ENCODE measurements at regions of chr11 and their contacts with region 1.

Region 1: GRCh38 chr11:119323538-119324033 is 6.7 kb upstream of the MCAM start:
- DNase-seq: peak; percentile 44
- H3K4me3 ChIP-seq: no peak overlapping the region
- H3K27ac ChIP-seq: no peak overlapping the region
- H3K4me1 ChIP-seq: no peaks in the 10 kb centered on the region
- H3K27me3 ChIP-seq: peaks cover 5% of the 10 kb centered on the region
- CTCF ChIP-seq: peak; percentile 43 to 66 (median 64)
- POLR2A ChIP-seq: no peak

Region 2: DNA sequence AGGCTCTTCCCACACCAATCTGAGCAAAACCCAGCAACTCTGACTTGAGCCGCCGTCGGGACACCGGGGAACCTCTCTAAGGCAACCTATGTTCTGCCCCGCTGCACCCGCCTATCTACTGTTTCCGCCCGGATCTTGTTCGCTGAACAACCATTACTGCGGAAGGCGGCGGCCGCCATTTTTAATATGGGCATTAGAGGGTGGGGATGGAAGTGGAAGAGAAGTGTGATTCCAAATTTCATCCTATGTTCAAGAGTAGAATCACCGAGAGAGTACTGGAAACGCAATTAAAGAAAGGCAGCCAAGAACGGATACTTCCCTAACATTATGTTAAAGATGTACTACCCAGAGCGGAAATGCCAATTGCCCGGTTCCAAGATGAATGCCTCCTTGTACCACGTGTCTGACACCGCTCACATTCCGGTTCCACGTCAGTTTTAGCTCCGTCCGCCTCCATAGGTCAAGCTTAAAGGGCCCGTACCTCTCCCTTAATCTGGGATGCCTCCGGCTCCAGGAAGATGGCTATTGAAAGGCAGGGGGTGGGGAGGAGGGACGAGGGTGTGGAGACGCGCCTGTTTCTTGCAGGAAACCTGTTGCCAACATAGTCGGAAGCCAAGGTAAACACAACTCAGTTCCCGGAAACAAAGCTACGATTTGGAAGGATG is 221.7 kb before region 1 on chr11 and contains the start of gene DPAGT1:
- intact Hi-C with region 1: loop called (anchors 5 kb)
- DNase-seq: peak; percentile 93
- H3K4me3 ChIP-seq: peak within 1 kb of the TSS; percentile 54 to 72
- H3K27ac ChIP-seq: peak within 1 kb of the TSS; percentile 87 to 91
- H3K4me1 ChIP-seq: no peaks in the 10 kb centered on the region
- H3K27me3 ChIP-seq: no peaks in the 10 kb centered on the region
- CTCF ChIP-seq: no peak
- POLR2A ChIP-seq: peak; percentile 26
- total RNA-seq, gene DPAGT1: 39.6 to 49.6 TPM

Region 3: DNA sequence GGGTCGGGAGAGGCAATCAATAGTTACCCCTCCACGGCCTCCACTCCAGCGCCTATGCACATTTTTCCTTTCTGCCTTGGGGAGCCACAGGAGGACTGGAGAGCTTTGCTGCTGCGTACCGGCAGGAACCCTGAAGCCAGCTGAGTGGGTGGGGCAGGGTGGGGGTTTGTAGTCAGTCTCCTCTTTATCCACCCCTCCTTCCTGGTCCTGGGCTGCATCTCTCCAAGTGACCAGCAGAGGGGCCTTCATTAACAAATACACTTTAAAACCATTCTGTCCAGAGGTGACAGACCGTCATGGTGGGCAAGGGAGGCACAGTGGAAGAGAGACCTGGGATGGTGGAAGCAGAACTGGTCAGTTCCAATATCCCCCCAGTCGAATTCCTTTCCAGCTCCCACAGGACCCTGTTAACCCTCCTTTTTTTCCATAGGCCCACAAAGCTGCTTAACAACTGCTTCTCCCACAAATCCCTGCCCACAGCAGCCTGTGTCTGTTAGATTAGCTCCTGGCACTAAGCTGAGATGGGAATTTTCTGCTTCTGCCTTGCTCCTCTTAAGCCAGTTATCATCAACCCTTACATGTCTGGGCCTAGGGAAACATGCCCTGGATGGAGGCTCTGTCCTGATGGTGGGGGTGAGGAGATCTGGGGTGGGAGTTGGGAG is 178.6 kb before region 1 on chr11:
- intact Hi-C with region 1: no loop called
- DNase-seq: peak; percentile 26
- H3K4me3 ChIP-seq: no peak overlapping the region
- H3K27ac ChIP-seq: no peak overlapping the region
- H3K4me1 ChIP-seq: no peaks in the 10 kb centered on the region
- H3K27me3 ChIP-seq: no peaks in the 10 kb centered on the region
- CTCF ChIP-seq: peak; percentile 42 to 59 (median 51)
- POLR2A ChIP-seq: no peak

Region 4: DNA sequence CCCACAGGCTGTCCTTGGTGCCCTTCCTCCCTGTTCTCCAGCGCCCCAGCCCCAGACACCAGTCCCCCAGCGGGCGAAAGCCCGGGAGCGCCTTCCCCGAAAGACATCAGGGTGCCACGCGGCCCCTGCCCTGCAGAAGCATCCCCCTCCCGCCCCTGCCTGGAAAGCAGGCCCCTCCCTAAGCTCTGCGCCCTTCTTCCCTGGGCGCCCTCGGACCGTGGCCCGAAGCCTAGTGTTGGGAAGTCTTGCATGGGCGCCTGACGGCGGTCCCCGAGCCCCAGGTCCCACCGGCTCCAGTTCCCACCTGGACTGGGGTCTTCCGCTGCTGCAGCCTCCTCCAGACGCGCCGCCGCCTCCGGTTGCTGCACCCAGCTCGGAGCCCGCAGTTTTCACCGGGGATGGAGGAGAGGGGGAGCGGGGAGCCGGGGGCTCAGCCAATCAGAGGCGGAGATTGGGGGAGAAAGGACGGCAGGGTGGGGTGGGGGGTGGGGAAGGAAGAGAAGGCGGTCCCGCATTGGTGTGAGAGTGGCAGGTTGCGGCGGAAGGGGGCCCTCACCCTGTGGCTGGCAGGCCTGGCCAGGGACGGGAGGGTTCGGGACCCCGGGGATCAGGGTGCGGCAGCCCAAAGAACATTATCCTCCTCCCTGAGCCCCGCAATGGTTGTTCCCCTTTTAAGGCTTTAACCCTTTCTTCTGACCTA is 99.4 kb after region 1 on chr11 and contains the start of gene THY1:
- intact Hi-C with region 1: no loop called
- DNase-seq: no peak
- H3K4me3 ChIP-seq: peak within 1 kb of the TSS; percentile 16 to 25
- H3K27ac ChIP-seq: no peak within 1 kb of the TSS
- H3K4me1 ChIP-seq: no peaks in the 10 kb centered on the region
- H3K27me3 ChIP-seq: peaks cover 7% of the 10 kb centered on the region
- CTCF ChIP-seq: no peak
- POLR2A ChIP-seq: no peak
- total RNA-seq, gene THY1: 3.3 to 39.7 TPM

Measured in prostate gland (tissue), 2 donors.